ENCODE measurements at regions of chr15 and their contacts with region 1.

Region 1: GRCh38 chr15:81301815-81302399 is 22.0 kb downstream of the STARD5 start:
- DNase-seq: peak; percentile 56
- ATAC-seq: peak; percentile 74
- H3K4me3 Mint-ChIP-seq: peak overlapping the region; percentile 99
- H3K27ac Mint-ChIP-seq: peak overlapping the region; percentile 99
- H3K4me1 Mint-ChIP-seq: peaks cover 96% of the 10 kb centered on the region
- H3K27me3 Mint-ChIP-seq: no peaks in the 10 kb centered on the region
- CTCF ChIP-seq: no peak

Region 2: DNA sequence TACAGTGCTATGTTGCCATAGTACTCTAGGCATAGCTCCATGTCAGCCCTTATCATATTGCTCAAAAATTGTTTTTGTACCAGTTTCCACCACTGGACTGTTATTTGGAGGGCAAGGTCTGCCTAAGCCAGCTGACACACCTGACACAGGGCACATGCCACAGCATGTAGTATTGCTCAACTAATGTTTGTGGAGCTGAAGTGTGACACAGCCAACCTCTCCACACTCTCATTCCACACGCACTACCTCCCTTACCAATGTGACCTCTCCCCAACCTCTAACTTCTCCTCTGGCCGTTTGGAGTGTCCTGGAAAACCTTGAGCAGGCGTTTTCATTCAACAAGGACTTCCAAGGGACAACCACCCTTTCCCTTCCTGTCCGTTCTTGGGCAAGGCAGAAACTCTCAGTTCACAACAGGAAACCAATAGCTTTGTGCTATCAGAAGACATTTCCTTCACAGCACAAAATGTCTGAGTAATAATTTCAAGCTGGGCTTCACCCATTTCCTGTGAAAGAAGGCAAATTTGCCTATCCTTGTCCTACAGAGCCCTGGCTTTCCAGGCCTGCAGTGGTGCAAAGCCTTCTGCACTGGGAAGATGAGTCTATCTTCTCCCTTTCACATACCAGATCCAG is 262.8 kb before region 1 on chr15:
- CTCF ChIA-PET with region 1: no interaction called
- POLR2A ChIA-PET with region 1: no interaction called
- intact Hi-C with region 1: no loop called
- DNase-seq: no peak
- ATAC-seq: no peak
- H3K4me3 Mint-ChIP-seq: no peak overlapping the region
- H3K27ac Mint-ChIP-seq: no peak overlapping the region
- H3K4me1 Mint-ChIP-seq: peaks cover 3% of the 10 kb centered on the region
- H3K27me3 Mint-ChIP-seq: no peaks in the 10 kb centered on the region
- CTCF ChIP-seq: no peak

Region 3: DNA sequence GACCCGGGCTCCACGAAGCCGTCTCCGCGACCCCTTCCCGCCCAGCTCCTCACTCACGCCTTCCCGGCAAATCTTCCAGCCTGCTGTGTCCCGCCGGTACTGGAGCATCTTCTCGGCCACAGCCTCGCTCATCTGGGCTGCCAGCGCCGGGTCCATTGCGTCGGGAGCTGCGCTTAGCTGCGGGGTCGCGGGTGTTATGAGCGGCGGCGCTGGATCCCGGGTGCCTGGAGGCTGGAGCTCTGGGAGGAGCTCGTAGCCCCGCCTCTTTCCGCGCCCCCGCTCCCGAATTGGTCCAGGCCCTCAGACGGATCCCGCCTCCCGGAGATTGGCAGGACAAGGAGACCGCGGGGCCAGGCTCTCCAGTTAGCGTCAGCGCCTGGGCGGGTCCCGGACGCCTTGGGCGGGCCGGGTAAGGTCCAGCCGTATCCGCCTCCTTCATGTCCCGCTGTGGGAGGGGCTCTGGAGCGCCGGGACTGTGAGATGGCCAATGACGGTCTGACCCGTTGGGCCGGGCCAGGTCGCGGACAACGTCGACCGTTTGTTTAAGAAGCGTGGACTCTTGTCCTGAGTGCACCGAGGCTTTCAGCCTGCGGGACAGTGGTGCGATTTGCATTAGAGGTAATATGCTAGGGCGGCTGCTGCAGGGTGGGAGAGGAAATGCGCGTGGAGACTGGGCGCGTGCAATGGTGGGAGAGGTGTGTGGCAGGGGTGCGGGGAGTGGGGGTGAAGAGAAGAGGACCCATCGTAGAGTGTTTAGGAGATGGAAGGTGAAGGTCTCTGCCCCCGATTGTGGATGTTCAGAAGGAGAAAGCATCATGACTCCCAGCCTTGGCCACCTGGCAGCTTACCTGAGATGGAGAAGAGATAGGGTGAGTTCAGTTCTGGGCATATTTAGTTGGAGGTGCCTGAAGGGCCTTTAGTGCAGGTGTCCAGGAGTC is 22.3 kb after region 1 on chr15 and contains the start of gene STARD5:
- CTCF ChIA-PET with region 1: interaction called, 4 read pairs
- POLR2A ChIA-PET with region 1: interaction called, 31 read pairs
- intact Hi-C with region 1: loop called (anchors 1 kb)
- DNase-seq: peak; percentile 89
- ATAC-seq: peak; percentile 99
- H3K4me3 Mint-ChIP-seq: peak within 1 kb of the TSS; percentile 97
- H3K27ac Mint-ChIP-seq: peak within 1 kb of the TSS; percentile 80
- H3K4me1 Mint-ChIP-seq: peaks cover 35% of the 10 kb centered on the region
- H3K27me3 Mint-ChIP-seq: no peaks in the 10 kb centered on the region
- CTCF ChIP-seq: no peak
- total RNA-seq, gene STARD5: 10.5 and 14.3 TPM in 2 replicates

Region 4: DNA sequence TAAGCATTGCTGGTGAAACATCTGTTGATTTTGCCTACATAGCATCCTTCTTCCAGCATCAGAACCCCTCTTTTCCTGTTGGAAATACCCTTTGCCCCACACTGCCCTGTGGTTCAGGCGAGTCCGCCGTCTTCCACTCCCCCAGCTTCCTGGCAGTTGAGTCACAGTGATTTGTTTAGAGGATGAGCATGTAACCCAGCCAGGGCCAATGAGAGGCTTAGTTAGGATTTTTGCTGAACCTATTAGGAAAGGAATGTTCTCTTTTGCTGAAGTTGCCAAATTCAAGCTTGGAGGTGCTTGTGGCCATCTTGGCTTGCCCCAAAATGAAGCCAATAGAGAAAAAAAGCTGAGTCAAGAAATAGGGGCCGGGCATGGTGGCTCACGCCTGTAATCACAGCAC is 762.9 kb after region 1 on chr15:
- CTCF ChIA-PET with region 1: no interaction called
- POLR2A ChIA-PET with region 1: no interaction called
- intact Hi-C with region 1: no loop called
- DNase-seq: no peak
- ATAC-seq: no peak
- H3K4me3 Mint-ChIP-seq: no peak overlapping the region
- H3K27ac Mint-ChIP-seq: no peak overlapping the region
- H3K4me1 Mint-ChIP-seq: peaks cover 11% of the 10 kb centered on the region
- H3K27me3 Mint-ChIP-seq: peaks cover 35% of the 10 kb centered on the region
- CTCF ChIP-seq: no peak